Heart left ventricle (tissue), 16 donors: ENCODE measurements at regions of chr10 and their contacts with region 1.

Region 1: GRCh38 chr10:49187950-49188761 is at the start of gene TMEM273:
- DNase-seq: peak; percentile 87 to 92 (median 90)
- ATAC-seq: peak; percentile 96 to 98 (median 96)
- H3K4me3 ChIP-seq: peak within 1 kb of the TSS in 11 of 12 donors; percentile 12 to 61 (median 50)
- H3K27ac ChIP-seq: peak within 1 kb of the TSS; percentile 35 to 88 (median 78)
- H3K4me1 ChIP-seq: peaks cover 0 to 82% (median 49%) of the 10 kb centered on the region in 12 donors
- H3K27me3 ChIP-seq: no peaks in the 10 kb centered on the region
- CTCF ChIP-seq: peak in 3 of 12 donors; percentile 7 to 35 (median 17)
- POLR2A ChIP-seq: peak in 1 of 2 donors; percentile 47
- total RNA-seq, gene TMEM273: 7.9 to 38.7 (median 16.5) TPM

Region 2: GRCh38 chr10:49242604-49243003 is 54.4 kb after region 1 on chr10:
- intact Hi-C with region 1: loop called in 1 of 10 experiments (anchors 10 kb)
- DNase-seq: peak; percentile 58 to 81 (median 75)
- ATAC-seq: peak; percentile 90 to 92 (median 91)
- H3K4me3 ChIP-seq: no peak overlapping the region
- H3K27ac ChIP-seq: peak overlapping the region in 7 of 12 donors; percentile 18 to 65 (median 41)
- H3K4me1 ChIP-seq: peaks cover 0 to 41% (median 18%) of the 10 kb centered on the region in 12 donors
- H3K27me3 ChIP-seq: no peaks in the 10 kb centered on the region
- CTCF ChIP-seq: no peak
- POLR2A ChIP-seq: no peak

Region 3: GRCh38 chr10:49290607-49291006 is 102.5 kb after region 1 on chr10:
- intact Hi-C with region 1: loop called in 3 of 10 experiments (anchors 5 kb)
- DNase-seq: no peak
- ATAC-seq: peak in 1 of 4 donors; percentile 44
- H3K4me3 ChIP-seq: no peak overlapping the region
- H3K27ac ChIP-seq: peak overlapping the region in 9 of 12 donors; percentile 1 to 72 (median 50)
- H3K4me1 ChIP-seq: peaks cover 0 to 40% (median 20%) of the 10 kb centered on the region in 12 donors
- H3K27me3 ChIP-seq: no peaks in the 10 kb centered on the region
- CTCF ChIP-seq: no peak
- POLR2A ChIP-seq: no peak